ENCODE measurements at regions of chr20 and their contacts with region 1.

Region 1: DNA sequence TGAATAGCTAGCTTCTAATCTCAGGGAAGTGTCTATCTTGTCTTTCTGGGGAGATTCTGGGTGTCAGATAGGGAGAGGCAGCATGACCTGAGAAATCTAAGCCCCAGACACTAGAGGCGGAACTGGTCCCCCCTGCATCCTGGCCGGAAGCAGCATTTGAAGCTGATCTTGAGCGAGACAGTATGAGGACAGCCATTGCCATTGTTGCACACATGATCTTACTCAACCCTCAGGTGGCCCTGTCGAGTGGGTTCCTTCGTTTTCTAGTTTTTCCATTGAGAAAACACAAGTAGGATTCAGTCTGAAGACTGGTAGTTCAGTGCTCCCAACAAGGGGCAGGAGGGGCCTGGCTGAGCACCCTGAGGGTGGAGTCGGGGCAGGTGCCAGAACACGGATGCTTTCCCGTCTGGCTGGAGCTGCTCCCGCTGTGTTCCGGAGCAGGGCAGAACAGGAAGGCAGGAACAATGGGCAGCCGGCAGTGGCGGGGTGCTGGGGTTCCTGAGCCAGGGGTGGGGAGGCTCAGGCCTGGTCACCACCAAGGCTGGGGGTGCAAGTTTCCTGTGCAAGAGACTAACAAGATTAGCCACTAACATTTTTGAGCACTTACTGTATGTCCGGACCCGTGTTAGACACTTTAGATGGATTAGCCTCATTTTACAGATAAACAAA is 7.9 kb upstream of the SDCBP2 start:
- DNase-seq: no peak
- ATAC-seq: peak; percentile 54
- H3K4me3 ChIP-seq: no peak overlapping the region
- H3K27ac ChIP-seq: no peak overlapping the region
- H3K4me1 ChIP-seq: peaks cover 16% of the 10 kb centered on the region
- H3K27me3 ChIP-seq: no peaks in the 10 kb centered on the region
- CTCF ChIP-seq: no peak

Region 2: DNA sequence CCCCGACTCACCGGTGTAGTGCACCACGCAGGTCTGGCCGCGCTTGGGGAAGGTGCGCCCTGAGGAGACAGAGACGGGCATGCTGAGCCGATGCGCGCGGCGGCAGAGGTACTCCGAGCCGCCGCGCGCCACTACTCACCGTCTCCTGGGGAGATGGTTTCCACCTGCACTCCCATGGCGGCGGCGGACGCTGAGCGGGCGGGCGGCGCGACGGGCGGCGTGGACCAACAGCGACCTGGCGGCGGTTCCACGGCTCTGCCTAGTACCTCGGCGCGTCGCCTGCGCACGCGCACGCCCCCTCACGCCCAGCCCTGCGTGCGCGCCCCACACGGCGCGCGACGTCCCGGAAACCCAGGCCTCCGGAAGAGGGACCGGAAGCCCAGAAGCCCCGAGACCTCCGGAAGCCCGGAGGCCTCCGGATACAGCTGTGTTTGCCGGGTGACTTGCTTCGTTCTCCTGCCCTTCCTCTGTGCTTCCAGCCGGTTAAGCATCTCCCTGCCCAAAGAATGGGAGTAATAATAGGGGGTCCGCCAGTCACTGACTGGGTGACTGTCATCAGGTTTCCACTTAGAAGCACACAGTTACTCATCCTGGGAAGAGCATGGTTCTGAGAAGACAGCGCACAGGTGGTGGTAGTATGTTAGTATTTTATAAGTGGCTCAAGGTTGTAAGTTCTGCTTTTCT is 56.1 kb after region 1 on chr20 and contains the start of gene FKBP1A:
- CTCF ChIA-PET with region 1: interaction called, 10 read pairs
- POLR2A ChIA-PET with region 1: interaction called, 6 read pairs
- intact Hi-C with region 1: no loop called
- DNase-seq: peak; percentile 99
- ATAC-seq: peak; percentile 78
- H3K4me3 ChIP-seq: peak within 1 kb of the TSS; percentile 79
- H3K27ac ChIP-seq: peak within 1 kb of the TSS; percentile 43
- H3K4me1 ChIP-seq: peaks cover 66% of the 10 kb centered on the region
- H3K27me3 ChIP-seq: no peaks in the 10 kb centered on the region
- CTCF ChIP-seq: no peak
- total RNA-seq, gene FKBP1A: 178 and 198 TPM in 2 replicates

Region 3: DNA sequence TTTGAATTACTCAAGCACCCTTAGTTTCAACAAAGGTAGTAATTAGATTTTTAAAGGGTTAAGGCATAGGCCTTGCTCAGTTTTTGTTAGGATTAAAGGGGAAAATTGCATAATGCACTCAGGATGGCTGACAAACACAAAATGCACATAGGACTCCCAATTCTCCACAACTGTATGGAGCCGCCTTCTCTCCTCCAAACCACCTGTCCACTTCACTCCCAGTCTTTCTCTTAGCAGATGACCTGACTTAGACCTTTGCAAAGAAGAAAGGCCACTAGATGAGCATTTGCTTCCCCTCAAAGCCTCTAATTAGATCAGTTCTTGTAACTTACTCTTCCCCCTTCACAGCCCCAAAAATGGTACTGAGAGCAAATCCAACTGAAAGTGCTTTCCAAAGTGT is 109.7 kb after region 1 on chr20:
- CTCF ChIA-PET with region 1: no interaction called
- POLR2A ChIA-PET with region 1: no interaction called
- intact Hi-C with region 1: no loop called
- DNase-seq: no peak
- ATAC-seq: no peak
- H3K4me3 ChIP-seq: no peak overlapping the region
- H3K27ac ChIP-seq: no peak overlapping the region
- H3K4me1 ChIP-seq: no peaks in the 10 kb centered on the region
- H3K27me3 ChIP-seq: no peaks in the 10 kb centered on the region
- CTCF ChIP-seq: no peak